ENCODE measurements at regions of chr4 and their contacts with region 1.

Region 1: DNA sequence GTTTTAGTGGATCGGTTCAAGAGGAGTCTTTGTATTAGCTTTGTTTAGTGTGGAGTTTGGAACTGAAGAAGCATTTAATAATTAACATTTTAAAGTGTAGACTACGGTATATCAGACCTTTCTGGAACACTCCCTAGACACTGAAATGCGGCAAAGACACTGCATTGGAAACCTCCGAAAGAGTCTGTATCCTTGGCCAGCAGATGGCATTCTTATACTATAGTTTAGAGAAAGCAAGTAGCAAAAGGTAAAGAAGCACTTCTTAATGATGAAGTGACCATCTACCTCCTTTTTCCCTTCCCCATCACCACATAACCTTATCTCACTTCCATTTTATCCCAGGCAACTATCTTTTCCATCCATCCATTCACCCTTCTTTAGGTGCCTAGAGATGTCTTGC is 7.6 kb downstream of the FABP2 start:
- DNase-seq: no peak
- H3K4me3 ChIP-seq: no peak overlapping the region
- H3K27ac ChIP-seq: peak overlapping the region in 1 of 2 donors; percentile 53
- H3K4me1 ChIP-seq: peaks cover 0 to 19% (median 0%) of the 10 kb centered on the region in 4 donors
- H3K27me3 ChIP-seq: no peaks in the 10 kb centered on the region
- CTCF ChIP-seq: peak; percentile 58 to 66

Region 2: DNA sequence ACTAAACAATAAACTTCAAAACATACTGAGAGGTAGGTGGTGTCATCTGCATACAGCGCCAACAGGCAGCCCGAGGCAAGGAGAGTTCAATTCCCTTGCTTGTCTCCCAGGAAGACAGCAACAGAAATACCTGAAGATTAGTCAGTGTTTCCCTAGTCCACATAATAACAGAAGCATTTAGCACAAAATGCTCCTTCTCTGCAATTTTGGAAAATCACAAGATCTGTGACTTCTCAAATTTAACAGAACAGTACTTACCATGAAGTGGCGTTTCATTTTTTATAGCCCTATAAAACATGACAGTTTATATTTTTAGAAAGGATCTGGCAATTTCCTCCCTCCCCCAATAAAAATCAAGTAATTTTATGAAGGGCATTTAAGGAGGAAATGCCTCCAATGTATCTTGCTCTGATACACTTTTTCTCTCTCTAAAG is 245.8 kb before region 1 on chr4:
- intact Hi-C with region 1: no loop called
- DNase-seq: no peak
- H3K4me3 ChIP-seq: no peak overlapping the region
- H3K27ac ChIP-seq: peak overlapping the region in 1 of 2 donors; percentile 3
- H3K4me1 ChIP-seq: peaks cover 0 to 14% (median 5%) of the 10 kb centered on the region in 4 donors
- H3K27me3 ChIP-seq: no peaks in the 10 kb centered on the region
- CTCF ChIP-seq: no peak

Region 3: GRCh38 chr4:119559044-119559647 is 244.8 kb after region 1 on chr4:
- intact Hi-C with region 1: loop called (anchors 10 kb)
- DNase-seq: no peak
- H3K4me3 ChIP-seq: no peak overlapping the region
- H3K27ac ChIP-seq: peak overlapping the region in 1 of 2 donors; percentile 20
- H3K4me1 ChIP-seq: peaks cover 0 to 4% (median 0%) of the 10 kb centered on the region in 4 donors
- H3K27me3 ChIP-seq: no peaks in the 10 kb centered on the region
- CTCF ChIP-seq: peak; percentile 48 to 56

Region 4: GRCh38 chr4:120056246-120056645 is 741.9 kb after region 1 on chr4:
- intact Hi-C with region 1: loop called (anchors 5 kb)
- DNase-seq: no peak
- H3K4me3 ChIP-seq: no peak overlapping the region
- H3K27ac ChIP-seq: peak overlapping the region; percentile 19 to 79
- H3K4me1 ChIP-seq: peaks cover 0 to 33% (median 9%) of the 10 kb centered on the region in 4 donors
- H3K27me3 ChIP-seq: no peaks in the 10 kb centered on the region
- CTCF ChIP-seq: peak; percentile 40 to 44